Naive thymus-derived CD4-positive, alpha-beta T cell (primary cell): ENCODE measurements at regions of chr15 and their contacts with region 1.

Region 1: DNA sequence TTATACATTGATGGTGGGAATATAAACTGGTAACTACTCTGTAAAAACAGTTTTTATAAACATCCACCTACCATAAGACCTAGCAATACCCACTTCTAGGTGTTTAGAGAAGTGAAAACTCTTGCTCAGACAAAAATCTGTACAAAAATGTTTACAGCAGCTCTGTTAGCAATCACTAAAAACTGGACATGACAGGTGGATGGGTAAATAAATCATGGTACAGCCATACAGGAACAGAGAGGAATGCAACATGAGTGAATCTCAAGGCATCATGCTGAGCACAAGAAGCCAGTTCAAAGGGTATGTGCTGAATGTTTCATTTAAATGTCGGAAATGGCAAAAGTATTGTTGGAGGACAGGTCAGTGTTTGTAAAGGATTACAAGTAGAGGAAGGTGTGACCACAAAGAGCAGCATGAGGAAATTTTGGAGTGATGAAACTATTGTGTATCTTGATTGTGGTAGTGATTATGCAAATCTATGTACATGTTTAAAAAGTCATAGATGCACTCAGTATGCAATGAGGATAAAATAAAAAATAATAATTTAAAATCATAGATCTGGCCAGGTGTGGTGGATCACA is 2.8 kb upstream of the RNU5A-1 start:
- DNase-seq: no peak
- ATAC-seq: no peak
- H3K4me3 ChIP-seq: no peak overlapping the region
- H3K4me3 Mint-ChIP-seq: peak overlapping the region in 1 of 10 donors; percentile 12
- H3K27ac ChIP-seq: no peak overlapping the region
- H3K27ac Mint-ChIP-seq: peak overlapping the region in 1 of 9 donors; percentile 62
- H3K4me1 ChIP-seq: peaks cover 12 to 18% of the 10 kb centered on the region in 2 donors
- H3K4me1 Mint-ChIP-seq: peaks cover 12 to 33% (median 21%) of the 10 kb centered on the region in 7 donors
- H3K27me3 ChIP-seq: no peaks in the 10 kb centered on the region
- H3K27me3 Mint-ChIP-seq: peaks cover 0 to 2% (median 0%) of the 10 kb centered on the region in 5 donors

Region 2: DNA sequence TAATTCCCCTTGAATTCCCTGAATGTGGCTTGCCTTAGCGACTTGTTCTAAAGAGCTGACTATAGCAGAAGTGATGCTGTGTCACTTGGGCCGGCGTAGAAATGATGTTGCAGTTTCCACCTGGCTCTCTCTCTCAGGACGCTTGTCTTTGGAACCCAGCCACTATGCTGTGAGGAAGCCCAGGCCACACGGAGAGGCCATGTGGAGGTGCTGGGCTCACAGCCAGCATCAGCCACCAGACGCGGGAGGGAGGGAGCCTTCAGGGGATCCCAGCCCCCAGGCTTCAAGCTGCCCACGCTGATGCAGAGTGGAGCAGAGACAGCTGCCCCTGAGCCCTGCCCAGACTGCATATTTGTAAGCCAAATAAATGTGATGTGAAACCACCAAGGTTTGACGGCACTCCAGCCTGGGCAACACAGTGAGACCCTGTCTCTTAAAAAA is 30.1 kb after region 1 on chr15:
- CTCF ChIA-PET with region 1: no interaction called
- POLR2A ChIA-PET with region 1: no interaction called
- intact Hi-C with region 1: no loop called
- DNase-seq: no peak
- ATAC-seq: no peak
- H3K4me3 ChIP-seq: no peak overlapping the region
- H3K4me3 Mint-ChIP-seq: no peak overlapping the region
- H3K27ac ChIP-seq: no peak overlapping the region
- H3K27ac Mint-ChIP-seq: no peak overlapping the region
- H3K4me1 ChIP-seq: no peaks in the 10 kb centered on the region
- H3K4me1 Mint-ChIP-seq: peaks cover 0 to 3% (median 0%) of the 10 kb centered on the region in 7 donors
- H3K27me3 ChIP-seq: no peaks in the 10 kb centered on the region
- H3K27me3 Mint-ChIP-seq: peaks cover 0 to 37% (median 18%) of the 10 kb centered on the region in 5 donors

Region 3: GRCh38 chr15:66504563-66505429 is 1211.8 kb after region 1 on chr15 and contains the starts of genes RPL4 and ZWILCH:
- CTCF ChIA-PET with region 1: no interaction called
- POLR2A ChIA-PET with region 1: no interaction called
- intact Hi-C with region 1: loop called in 1 of 2 experiments (anchors 10 kb)
- DNase-seq: peak; percentile 65 to 88 (median 83)
- ATAC-seq: peak; percentile 93
- H3K4me3 ChIP-seq: peak within 1 kb of the TSS; percentile 99
- H3K4me3 Mint-ChIP-seq: peak within 1 kb of the TSS; percentile 90 to 100 (median 100)
- H3K27ac ChIP-seq: peak within 1 kb of the TSS; percentile 93
- H3K27ac Mint-ChIP-seq: peak within 1 kb of the TSS; percentile 92 to 100 (median 99)
- H3K4me1 ChIP-seq: peaks cover 13 to 22% of the 10 kb centered on the region in 2 donors
- H3K4me1 Mint-ChIP-seq: peaks cover 21 to 57% (median 41%) of the 10 kb centered on the region in 7 donors
- H3K27me3 ChIP-seq: no peaks in the 10 kb centered on the region
- H3K27me3 Mint-ChIP-seq: no peaks in the 10 kb centered on the region
- total RNA-seq, gene RPL4: 2,229 to 4,292 (median 4,136) TPM
- total RNA-seq, gene ZWILCH: 5.6 to 20.3 (median 6.8) TPM